Endothelial cell of umbilical vein (primary cell): ENCODE measurements at regions of chr12 and their contacts with region 1.

Region 1: DNA sequence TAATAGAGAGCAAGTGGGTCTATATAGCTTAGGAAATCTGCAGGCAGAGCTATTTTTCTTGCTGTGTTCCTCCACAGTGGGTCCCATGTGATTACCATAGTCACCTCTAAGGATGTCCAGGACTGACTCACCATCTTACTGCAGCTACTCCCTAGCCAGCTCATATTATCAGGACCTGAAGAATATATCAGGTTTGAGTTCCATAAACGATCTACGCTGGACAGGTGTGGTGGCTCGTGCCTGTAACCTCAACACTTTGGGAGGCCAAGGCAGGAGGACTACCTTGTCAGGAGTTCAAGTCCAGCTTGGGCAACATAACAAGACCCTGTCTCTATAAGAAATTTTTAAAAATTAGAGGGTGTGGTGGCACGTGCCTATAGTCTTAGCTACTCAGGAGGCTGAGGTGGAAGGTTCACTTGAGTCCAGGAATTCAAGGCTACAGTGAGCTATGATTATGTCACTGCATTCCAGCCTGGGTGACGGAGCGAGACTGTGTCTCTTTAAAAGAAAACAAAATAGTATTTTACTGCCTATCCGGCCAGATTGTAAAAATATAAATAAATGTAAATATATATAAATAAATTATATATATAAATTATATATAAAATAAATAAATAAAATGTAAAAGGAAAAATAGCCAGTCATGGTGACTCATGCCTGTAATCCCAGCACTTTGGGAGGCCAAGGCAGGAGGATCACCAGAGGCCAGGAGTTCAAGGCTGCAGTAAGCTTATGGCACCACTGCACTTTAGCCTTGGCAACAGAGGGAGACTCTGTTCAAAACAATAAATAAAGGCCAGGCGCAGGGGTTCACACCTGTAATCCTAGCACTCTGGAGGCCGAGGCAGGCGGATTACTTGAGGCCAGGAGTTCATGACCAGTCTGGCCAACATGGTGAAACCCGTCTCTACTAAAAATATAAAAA is 6.9 kb upstream of the SPRYD4 start:
- DNase-seq: no peak
- H3K4me3 ChIP-seq: no peak overlapping the region
- H3K27ac ChIP-seq: no peak overlapping the region
- H3K4me1 ChIP-seq: no peaks in the 10 kb centered on the region
- H3K27me3 ChIP-seq: no peaks in the 10 kb centered on the region
- CTCF ChIP-seq: no peak
- POLR2A ChIP-seq: no peak

Region 2: DNA sequence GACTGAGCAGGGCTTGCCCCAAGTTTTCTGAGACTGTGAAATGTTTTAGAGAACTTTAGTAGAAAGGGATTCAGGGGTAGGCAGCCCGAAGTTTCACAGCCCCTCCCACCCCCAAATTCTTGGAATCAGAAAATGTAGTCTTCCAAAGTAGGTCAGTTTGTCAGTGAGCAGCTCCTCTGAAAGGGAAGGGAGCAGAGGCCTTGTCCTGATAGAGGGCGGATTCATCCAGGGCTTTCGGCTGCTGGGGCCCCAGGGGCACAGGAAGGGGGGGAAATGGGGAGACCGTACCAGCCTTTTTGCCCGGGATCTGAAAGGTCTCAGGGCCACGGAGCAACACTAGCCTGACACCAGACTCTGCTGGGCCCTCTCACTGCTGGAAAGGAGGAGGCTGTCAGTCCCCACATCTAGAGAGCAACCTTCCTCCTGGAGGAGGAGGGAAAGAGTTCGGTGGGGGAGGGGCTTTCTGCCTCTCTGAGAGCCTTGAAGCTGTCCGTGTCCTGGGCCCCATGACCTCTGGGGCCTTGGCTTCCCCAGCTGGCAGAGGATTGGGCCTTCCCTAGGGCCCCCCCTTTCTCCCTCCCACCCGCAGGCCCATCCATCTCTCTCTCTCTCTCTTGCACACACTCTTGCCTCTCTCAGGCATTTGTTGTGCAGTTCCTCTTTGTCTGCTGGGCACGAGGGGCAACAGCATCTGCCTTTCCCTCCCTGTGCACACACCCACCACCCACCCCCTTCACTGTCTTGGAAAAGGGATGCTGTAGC is 440.9 kb before region 1 on chr12 and contains the start of gene IKZF4:
- CTCF ChIA-PET with region 1: no interaction called
- POLR2A ChIA-PET with region 1: no interaction called
- dilution Hi-C with region 1: no loop called
- intact Hi-C with region 1: no loop called
- DNase-seq: no peak
- H3K4me3 ChIP-seq: peak within 1 kb of the TSS in 1 of 3 experiments; percentile 10
- H3K27ac ChIP-seq: no peak within 1 kb of the TSS
- H3K4me1 ChIP-seq: no peaks in the 10 kb centered on the region
- H3K27me3 ChIP-seq: no peaks in the 10 kb centered on the region
- CTCF ChIP-seq: no peak
- POLR2A ChIP-seq: no peak
- total RNA-seq, gene IKZF4: 3.5 and 5.4 TPM in 2 replicates

Region 3: GRCh38 chr12:56266693-56267442 is 194.6 kb before region 1 on chr12 and contains the start of gene COQ10A:
- CTCF ChIA-PET with region 1: interaction called, 7 read pairs
- POLR2A ChIA-PET with region 1: no interaction called
- dilution Hi-C with region 1: no loop called
- intact Hi-C with region 1: loop called (anchors 5 kb)
- DNase-seq: peak; percentile 86
- H3K4me3 ChIP-seq: peak within 1 kb of the TSS; percentile 25 to 50 (median 43)
- H3K27ac ChIP-seq: peak within 1 kb of the TSS; percentile 61
- H3K4me1 ChIP-seq: peaks cover 4% of the 10 kb centered on the region
- H3K27me3 ChIP-seq: no peaks in the 10 kb centered on the region
- CTCF ChIP-seq: peak; percentile 24 to 60
- POLR2A ChIP-seq: peak; percentile 90
- total RNA-seq, gene COQ10A: 14.7 and 15.3 TPM in 2 replicates

Region 4: DNA sequence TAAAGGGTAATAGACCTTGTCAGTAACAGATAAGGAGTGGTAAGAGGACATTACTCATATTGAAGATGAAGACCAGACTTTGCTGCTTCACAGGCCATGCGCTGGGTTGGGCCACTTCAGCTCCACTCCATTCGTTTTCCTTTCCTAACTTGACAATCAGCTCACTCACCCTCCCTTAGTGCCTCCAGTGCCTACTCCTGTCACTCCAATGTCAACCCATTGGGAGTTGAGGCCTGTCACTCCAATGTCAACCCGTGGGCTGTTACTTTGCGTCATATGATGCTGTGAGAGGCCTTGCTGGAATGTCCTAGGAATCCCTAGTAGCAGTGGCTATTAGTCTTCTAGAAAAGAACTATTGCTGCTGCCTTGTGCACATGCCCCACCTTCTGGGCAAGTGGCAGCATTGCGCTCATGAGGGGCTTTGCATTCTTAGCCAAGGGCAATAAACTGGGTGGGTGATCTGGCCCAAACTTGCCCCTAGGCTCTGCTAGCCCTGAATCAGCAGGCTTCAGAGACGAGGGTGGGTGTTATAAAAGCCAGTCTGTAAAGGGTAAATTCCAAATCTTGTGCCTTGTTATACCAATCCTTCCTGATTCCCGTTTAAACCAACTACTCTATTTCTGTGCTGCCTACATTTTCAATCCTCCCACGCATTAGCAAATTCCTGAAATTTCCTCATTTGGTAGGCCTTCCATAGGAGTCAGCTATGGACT is 132.6 kb after region 1 on chr12:
- CTCF ChIA-PET with region 1: no interaction called
- POLR2A ChIA-PET with region 1: no interaction called
- dilution Hi-C with region 1: no loop called
- intact Hi-C with region 1: no loop called
- DNase-seq: peak; percentile 75
- H3K4me3 ChIP-seq: no peak overlapping the region
- H3K27ac ChIP-seq: peak overlapping the region; percentile 3
- H3K4me1 ChIP-seq: no peaks in the 10 kb centered on the region
- H3K27me3 ChIP-seq: no peaks in the 10 kb centered on the region
- CTCF ChIP-seq: peak; percentile 83 to 87
- POLR2A ChIP-seq: peak; percentile 35